ENCODE measurements at regions of chr1 and their contacts with region 1.

Region 1: GRCh38 chr1:179121159-179121938 is 39.5 kb downstream of the TOR3A start:
- DNase-seq: no peak
- ATAC-seq: peak; percentile 29

Region 2: GRCh38 chr1:179190861-179191260 is 69.5 kb after region 1 on chr1:
- intact Hi-C with region 1: loop called (anchors 10 kb)
- DNase-seq: no peak
- ATAC-seq: peak; percentile 64

Measured in Right ventricle myocardium superior (tissue), 1 donor.